A549 (cell line): ENCODE measurements at regions of chr10 and their contacts with region 1.

Region 1: DNA sequence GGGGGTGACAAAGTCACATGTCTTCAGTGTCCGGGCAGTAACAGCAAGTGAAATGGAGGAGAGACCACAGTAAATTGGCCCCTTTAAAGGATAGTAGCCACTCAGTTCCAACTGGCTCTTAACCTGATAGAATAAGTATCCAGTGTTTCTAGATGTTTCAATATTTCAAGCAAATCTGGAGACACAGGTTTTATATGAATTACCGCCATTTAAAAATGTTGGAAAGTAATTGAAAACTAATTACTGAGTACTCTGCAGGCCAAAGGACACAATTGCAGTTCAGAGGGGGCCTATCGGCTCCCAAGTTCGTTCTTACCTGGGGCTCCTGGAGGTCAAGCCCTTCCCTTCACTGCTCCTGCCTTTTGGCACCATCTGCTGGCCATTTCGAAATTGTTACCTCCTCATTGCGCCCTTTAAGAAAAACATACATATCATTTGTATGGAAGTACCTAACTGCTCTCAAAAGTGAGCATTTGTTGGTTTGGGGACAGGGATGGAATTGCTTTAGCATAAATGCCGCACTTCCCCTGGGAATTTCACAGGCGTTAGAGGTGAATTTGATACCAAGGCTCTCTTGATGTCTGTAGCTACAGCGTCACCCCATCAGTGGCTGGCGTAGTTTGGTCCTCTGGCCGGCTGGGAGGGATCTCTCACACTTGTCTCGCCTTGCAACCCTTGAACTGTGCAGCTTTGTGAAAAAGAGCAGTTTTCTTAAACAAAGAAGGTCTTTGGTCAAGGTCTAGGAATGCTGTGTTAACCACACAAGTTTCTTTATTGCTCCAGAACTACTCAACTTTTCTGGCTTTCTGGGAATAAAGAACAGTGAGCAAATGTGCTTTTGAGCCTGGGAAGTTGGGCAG is 220.0 kb downstream of the ARHGAP21 start:
- DNase-seq: peak; percentile 34 to 75
- ATAC-seq: peak; percentile 90 to 93
- H3K4me3 ChIP-seq: no peak overlapping the region
- H3K27ac ChIP-seq: no peak overlapping the region
- H3K4me1 ChIP-seq: no peaks in the 10 kb centered on the region
- CTCF ChIP-seq: peak; percentile 90
- EP300 ChIP-seq: no peak
- POLR2A ChIP-seq: no peak
- RAD21 ChIP-seq: peak; percentile 93 to 94

Region 2: DNA sequence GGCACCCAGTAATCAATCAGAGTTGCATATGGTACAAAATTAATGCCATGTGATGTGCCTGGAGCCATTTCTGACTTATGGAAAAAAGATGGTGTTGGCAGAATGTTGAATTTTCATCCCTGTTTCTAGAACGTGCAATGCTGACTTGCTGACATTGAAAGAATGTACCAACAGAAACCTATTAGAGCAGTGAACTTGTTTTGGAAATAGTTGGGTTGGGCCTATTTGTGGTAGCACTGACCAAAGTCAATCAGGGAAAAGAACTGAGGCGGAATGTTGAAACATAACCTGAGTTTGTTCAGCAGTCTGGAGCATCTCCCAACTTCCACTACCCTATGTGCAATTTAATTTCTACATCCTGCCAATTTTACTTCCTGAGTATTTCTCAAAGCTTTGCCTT is 306.4 kb before region 1 on chr10:
- CTCF ChIA-PET with region 1: interaction called, 10 read pairs
- POLR2A ChIA-PET with region 1: no interaction called
- DNase-seq: no peak
- ATAC-seq: no peak
- H3K4me3 ChIP-seq: no peak overlapping the region
- H3K27ac ChIP-seq: no peak overlapping the region
- H3K4me1 ChIP-seq: no peaks in the 10 kb centered on the region
- CTCF ChIP-seq: no peak
- EP300 ChIP-seq: no peak
- POLR2A ChIP-seq: no peak
- RAD21 ChIP-seq: no peak

Region 3: GRCh38 chr10:24360282-24361127 is 143.2 kb before region 1 on chr10:
- CTCF ChIA-PET with region 1: interaction called, 11 read pairs
- POLR2A ChIA-PET with region 1: no interaction called
- DNase-seq: peak; percentile 35 to 64
- ATAC-seq: peak; percentile 81 to 93; a peak in 5 of 6 replicates
- H3K4me3 ChIP-seq: no peak overlapping the region
- H3K27ac ChIP-seq: no peak overlapping the region
- H3K4me1 ChIP-seq: no peaks in the 10 kb centered on the region
- CTCF ChIP-seq: peak; percentile 61
- EP300 ChIP-seq: no peak
- POLR2A ChIP-seq: no peak
- RAD21 ChIP-seq: peak; percentile 67 to 77

Region 4: DNA sequence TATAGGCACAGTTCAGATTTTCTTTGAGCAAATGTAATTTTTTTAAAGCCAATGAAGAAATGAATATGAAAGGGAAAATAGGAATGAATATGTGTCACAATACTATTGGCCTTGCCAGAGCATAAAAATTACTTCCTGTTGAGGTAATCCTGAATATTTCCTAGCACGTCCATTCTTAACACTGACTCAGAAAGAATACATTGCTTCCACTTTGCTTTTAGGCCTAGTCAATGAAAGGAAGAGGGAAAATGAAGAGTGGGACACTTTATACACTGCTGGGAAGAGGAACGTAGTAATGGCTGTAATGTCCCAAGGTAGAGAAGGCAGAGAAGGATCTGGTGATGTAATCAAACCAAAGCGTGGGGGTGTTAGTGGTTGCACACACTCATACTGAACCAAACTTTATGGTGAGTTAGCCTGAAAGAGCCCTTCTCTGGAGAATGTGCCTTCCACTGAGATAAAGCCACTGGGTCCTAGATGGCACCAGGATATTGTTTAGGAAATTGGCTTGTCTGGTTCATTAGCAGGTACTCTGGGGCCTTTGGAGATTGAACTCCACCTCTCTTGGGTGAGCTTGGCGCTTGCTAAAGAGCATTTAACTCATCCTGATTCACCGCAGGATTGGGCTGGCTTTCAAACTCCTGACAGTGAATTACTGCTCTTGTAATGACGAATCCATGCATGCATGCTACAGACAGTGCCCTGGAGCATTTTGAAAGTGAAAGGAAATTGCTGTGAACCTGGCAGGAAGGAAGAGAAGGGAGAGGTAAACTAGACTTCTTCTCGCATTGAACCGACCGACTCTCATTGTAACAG is 39.9 kb before region 1 on chr10:
- CTCF ChIA-PET with region 1: interaction called, 11 read pairs
- POLR2A ChIA-PET with region 1: interaction called, 3 read pairs
- DNase-seq: peak in 1 of 2 experiments; percentile 16
- ATAC-seq: no peak
- H3K4me3 ChIP-seq: no peak overlapping the region
- H3K27ac ChIP-seq: peak overlapping the region in 1 of 2 experiments; percentile 29; a peak in 1 of 6 replicates
- H3K4me1 ChIP-seq: peaks cover 18% of the 10 kb centered on the region
- CTCF ChIP-seq: no peak
- EP300 ChIP-seq: no peak
- POLR2A ChIP-seq: no peak
- RAD21 ChIP-seq: no peak

Region 5: GRCh38 chr10:24518981-24519597 is 15.4 kb after region 1 on chr10:
- CTCF ChIA-PET with region 1: interaction called, 89 read pairs
- POLR2A ChIA-PET with region 1: no interaction called
- DNase-seq: peak; percentile 57 to 67
- ATAC-seq: peak; percentile 83 to 93
- H3K4me3 ChIP-seq: no peak overlapping the region
- H3K27ac ChIP-seq: no peak overlapping the region
- H3K4me1 ChIP-seq: no peaks in the 10 kb centered on the region
- CTCF ChIP-seq: peak; percentile 82
- EP300 ChIP-seq: no peak
- POLR2A ChIP-seq: no peak
- RAD21 ChIP-seq: peak; percentile 82 to 83

Region 6: DNA sequence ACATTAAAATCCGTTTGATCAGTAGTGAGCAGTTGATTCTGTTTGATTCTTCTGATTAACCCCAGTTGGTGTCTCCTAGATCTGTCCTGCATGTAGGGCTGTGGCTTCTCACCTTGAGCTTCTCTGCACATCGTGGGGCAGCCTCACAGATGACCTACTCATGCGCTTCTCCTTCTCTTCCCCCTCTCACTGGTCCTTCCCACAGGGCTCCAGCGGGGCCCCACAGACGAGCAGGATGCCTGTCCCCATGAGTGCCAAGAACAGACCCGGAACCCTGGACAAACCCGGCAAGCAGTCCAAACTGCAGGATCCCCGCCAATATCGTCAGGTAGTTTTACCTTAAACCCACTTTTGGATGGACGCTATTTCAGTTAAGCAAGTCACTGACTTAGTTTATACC is 41.1 kb after region 1 on chr10:
- CTCF ChIA-PET with region 1: no interaction called
- POLR2A ChIA-PET with region 1: no interaction called
- DNase-seq: no peak
- ATAC-seq: no peak
- H3K4me3 ChIP-seq: no peak overlapping the region
- H3K27ac ChIP-seq: no peak overlapping the region
- H3K4me1 ChIP-seq: no peaks in the 10 kb centered on the region
- CTCF ChIP-seq: no peak
- EP300 ChIP-seq: no peak
- POLR2A ChIP-seq: no peak
- RAD21 ChIP-seq: no peak

Region 7: DNA sequence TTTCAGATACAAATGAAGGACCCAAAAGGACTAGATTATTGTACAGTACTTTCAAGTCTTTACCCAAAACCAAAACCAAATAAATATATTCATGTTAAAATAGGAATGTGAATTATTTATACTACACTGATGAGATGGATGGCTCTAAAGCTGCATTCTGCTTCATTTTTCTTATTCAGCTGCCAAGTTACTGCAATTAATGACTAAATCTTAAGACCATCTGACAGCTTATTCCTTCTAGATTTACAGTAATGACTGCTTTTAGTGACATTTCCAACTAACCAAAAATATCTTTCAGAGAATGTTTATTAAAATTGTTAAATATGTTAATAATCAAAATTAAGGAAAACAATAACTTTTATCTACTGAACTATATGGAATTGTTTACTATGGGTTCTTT is 491.4 kb after region 1 on chr10:
- CTCF ChIA-PET with region 1: no interaction called
- POLR2A ChIA-PET with region 1: no interaction called
- DNase-seq: no peak
- ATAC-seq: no peak
- H3K4me3 ChIP-seq: no peak overlapping the region
- H3K27ac ChIP-seq: no peak overlapping the region
- H3K4me1 ChIP-seq: no peaks in the 10 kb centered on the region; the same call in 2 of the 3 replicates
- CTCF ChIP-seq: no peak
- EP300 ChIP-seq: no peak
- POLR2A ChIP-seq: no peak
- RAD21 ChIP-seq: no peak